ENCODE measurements at regions of chr15 and their contacts with region 1.

Region 1: GRCh38 chr15:78195735-78196201 is 38.6 kb downstream of the ACSBG1 start:
- DNase-seq: peak; percentile 60 to 75 (median 71)
- ATAC-seq: peak; percentile 95
- H3K4me3 ChIP-seq: no peak overlapping the region
- H3K27ac ChIP-seq: no peak overlapping the region
- H3K4me1 ChIP-seq: peaks cover 0 to 4% of the 10 kb centered on the region in 2 experiments; a peak in 1 of 5 replicates
- H3K27me3 ChIP-seq: peaks cover 6 to 29% of the 10 kb centered on the region in 2 experiments; a peak in 4 of 5 replicates
- CTCF ChIP-seq: peak; percentile 85 to 90 (median 88)
- EP300 ChIP-seq: no peak
- POLR2A ChIP-seq: no peak
- RAD21 ChIP-seq: peak; percentile 82 to 93

Region 2: DNA sequence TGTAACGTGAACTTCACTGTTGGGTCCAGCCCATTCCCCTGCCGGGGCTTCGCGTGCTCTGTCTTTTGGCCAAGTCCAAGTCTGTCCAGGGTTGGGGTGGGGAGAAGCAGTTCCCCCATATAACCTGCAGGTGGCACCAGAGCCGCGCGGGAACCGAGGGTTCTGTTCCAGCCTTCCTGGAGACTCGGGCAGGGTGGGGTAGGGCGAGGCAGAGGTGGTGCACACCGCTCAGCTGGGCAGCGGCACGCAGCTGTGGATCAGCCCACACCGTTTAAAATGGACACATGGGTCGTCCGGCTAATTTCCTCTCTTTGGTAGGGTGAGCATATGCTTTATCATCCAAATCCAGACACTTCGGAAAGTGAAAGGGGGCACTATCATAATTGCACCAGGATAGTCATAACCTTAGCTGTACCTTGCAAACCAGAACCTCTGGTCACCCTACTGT is 236.3 kb before region 1 on chr15:
- CTCF ChIA-PET with region 1: no interaction called
- POLR2A ChIA-PET with region 1: no interaction called
- in situ Hi-C with region 1: no loop called
- intact Hi-C with region 1: loop called (anchors 2 kb)
- DNase-seq: peak; percentile 84 to 90 (median 90)
- ATAC-seq: peak; percentile 100
- H3K4me3 ChIP-seq: no peak overlapping the region
- H3K27ac ChIP-seq: no peak overlapping the region
- H3K4me1 ChIP-seq: peaks cover 0 to 5% of the 10 kb centered on the region in 2 experiments; a peak in 3 of 5 replicates
- H3K27me3 ChIP-seq: peaks cover 5 to 13% of the 10 kb centered on the region in 2 experiments; a peak in 3 of 5 replicates
- CTCF ChIP-seq: peak; percentile 93 to 96 (median 95)
- EP300 ChIP-seq: no peak
- POLR2A ChIP-seq: no peak
- RAD21 ChIP-seq: peak; percentile 93 to 94

Region 3: GRCh38 chr15:78034495-78035191 is 161.1 kb before region 1 on chr15:
- CTCF ChIA-PET with region 1: no interaction called
- POLR2A ChIA-PET with region 1: no interaction called
- in situ Hi-C with region 1: no loop called
- intact Hi-C with region 1: no loop called
- DNase-seq: peak in 1 of 4 experiments; percentile 14
- ATAC-seq: peak; percentile 62
- H3K4me3 ChIP-seq: no peak overlapping the region
- H3K27ac ChIP-seq: no peak overlapping the region
- H3K4me1 ChIP-seq: peaks cover 0 to 24% of the 10 kb centered on the region in 2 experiments; a peak in 4 of 5 replicates
- H3K27me3 ChIP-seq: no peaks in the 10 kb centered on the region
- CTCF ChIP-seq: no peak
- EP300 ChIP-seq: no peak
- POLR2A ChIP-seq: no peak
- RAD21 ChIP-seq: no peak

Region 4: GRCh38 chr15:78131295-78132061 is 64.3 kb before region 1 on chr15 and contains the start of gene CIB2:
- CTCF ChIA-PET with region 1: interaction called, 7 read pairs
- POLR2A ChIA-PET with region 1: no interaction called
- in situ Hi-C with region 1: no loop called
- intact Hi-C with region 1: loop called (anchors 2 kb)
- DNase-seq: peak; percentile 85 to 96 (median 94)
- ATAC-seq: peak; percentile 92
- H3K4me3 ChIP-seq: peak within 1 kb of the TSS; percentile 69
- H3K27ac ChIP-seq: peak within 1 kb of the TSS; percentile 81
- H3K4me1 ChIP-seq: peaks cover 25 to 31% of the 10 kb centered on the region in 2 experiments
- H3K27me3 ChIP-seq: no peaks in the 10 kb centered on the region
- CTCF ChIP-seq: peak; percentile 59 to 88 (median 80)
- EP300 ChIP-seq: no peak
- POLR2A ChIP-seq: peak; percentile 83
- RAD21 ChIP-seq: peak; percentile 75 to 76
- polyA plus RNA-seq, gene CIB2: 1.5 to 2.0 TPM